CD8-positive, alpha-beta memory T cell (primary cell): ENCODE measurements at regions of chr21 and their contacts with region 1.

Region 1: DNA sequence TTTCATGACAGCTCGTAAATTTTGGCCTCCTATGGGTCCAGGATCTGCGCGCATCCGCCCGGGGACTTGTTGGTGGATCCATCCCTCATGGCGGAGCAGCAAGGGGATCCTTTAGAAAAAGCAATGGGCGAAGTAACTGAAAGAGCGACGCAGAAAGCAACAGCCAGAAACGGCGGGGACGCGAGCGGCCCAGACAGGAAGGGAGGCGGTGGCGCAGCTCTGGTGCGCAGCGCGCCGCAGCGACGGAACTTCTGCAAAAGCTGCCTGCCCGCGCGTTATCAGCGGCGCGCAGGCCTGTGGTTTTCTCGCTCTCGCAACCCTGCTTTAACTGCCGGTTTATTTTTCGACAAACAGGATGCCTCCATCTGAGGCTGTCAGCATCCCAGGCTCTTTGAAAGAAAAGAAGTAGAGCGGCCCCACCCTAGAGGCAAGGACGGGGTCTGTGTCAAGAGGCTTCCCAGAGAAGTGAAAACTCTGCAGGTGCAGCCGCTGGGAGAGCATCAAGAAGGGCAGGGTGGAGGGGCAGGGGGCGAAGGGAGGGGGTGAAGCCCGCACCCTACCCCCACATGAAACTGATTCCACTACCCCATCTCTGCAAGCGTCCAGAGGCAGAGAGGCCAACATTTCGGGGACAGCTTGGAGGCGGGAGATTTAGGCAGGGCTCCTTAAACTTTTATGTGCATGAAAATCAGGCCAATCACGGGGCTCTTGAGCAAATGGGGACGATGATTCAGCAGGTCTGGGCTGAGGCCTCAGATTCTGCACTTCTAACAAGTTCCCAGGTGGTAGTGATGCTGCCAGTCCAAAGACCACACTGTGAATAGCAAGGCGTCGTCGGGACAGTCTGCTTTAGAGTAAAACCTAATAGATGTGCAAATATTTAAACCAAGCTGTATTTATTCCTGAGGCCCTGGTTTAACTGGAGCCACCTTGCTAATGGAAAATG is 22.2 kb downstream of the RUNX1 start:
- DNase-seq: peak; percentile 73 to 91 (median 90)
- H3K4me3 ChIP-seq: peak overlapping the region; percentile 35
- H3K4me3 Mint-ChIP-seq: peak overlapping the region; percentile 83 to 94 (median 86)
- H3K27ac ChIP-seq: peak overlapping the region; percentile 76
- H3K27ac Mint-ChIP-seq: peak overlapping the region; percentile 96 to 100 (median 100)
- H3K4me1 ChIP-seq: peaks cover 90% of the 10 kb centered on the region
- H3K4me1 Mint-ChIP-seq: peaks cover 85 to 97% (median 95%) of the 10 kb centered on the region in 3 donors
- H3K27me3 ChIP-seq: no peaks in the 10 kb centered on the region
- H3K27me3 Mint-ChIP-seq: no peaks in the 10 kb centered on the region

Region 2: DNA sequence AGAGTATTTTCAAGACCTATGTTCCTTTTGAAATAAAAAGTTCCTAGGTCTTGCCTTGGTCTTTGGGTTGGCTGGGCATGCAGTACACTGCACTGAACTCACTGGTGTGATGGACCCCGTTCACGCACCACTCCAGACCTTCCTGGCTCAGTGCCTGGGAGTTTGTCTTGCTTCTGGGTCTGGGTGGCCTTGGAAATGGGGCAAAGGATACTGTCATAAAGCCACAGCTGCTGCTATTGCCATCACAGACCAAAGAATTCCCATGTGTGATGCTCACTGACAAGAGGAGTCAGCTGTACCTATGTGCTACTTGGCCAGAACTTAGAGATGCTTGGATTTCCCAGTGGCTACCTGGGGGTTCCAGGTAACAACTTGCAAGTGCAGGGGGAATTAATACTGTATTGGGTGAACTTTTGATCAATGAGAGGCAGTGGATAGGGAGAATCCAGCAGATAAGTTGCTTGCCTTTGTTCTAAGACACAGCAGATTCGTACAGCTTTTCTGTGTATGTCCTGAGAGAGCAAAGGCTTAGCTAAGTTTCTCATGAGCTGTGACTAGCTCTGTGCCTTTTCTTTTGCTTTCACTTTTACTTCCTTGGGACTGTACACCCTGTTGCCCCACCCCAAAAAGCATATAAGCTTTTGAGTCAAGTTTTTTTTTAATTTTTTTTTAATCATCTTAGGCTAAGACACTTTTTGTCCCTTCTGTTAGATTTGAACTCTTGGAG is 93.1 kb before region 1 on chr21:
- CTCF ChIA-PET with region 1: no interaction called
- POLR2A ChIA-PET with region 1: interaction called, 15 read pairs
- DNase-seq: peak in 4 of 5 donors; percentile 21 to 63 (median 57)
- H3K4me3 ChIP-seq: peak overlapping the region; percentile 51
- H3K4me3 Mint-ChIP-seq: peak overlapping the region; percentile 57 to 90 (median 84)
- H3K27ac ChIP-seq: peak overlapping the region; percentile 32
- H3K27ac Mint-ChIP-seq: peak overlapping the region; percentile 91 to 99 (median 98)
- H3K4me1 ChIP-seq: peaks cover 81% of the 10 kb centered on the region
- H3K4me1 Mint-ChIP-seq: peaks cover 83 to 92% (median 91%) of the 10 kb centered on the region in 3 donors
- H3K27me3 ChIP-seq: no peaks in the 10 kb centered on the region
- H3K27me3 Mint-ChIP-seq: no peaks in the 10 kb centered on the region

Region 3: GRCh38 chr21:35045542-35046262 is 18.8 kb after region 1 on chr21:
- CTCF ChIA-PET with region 1: interaction called, 20 read pairs
- POLR2A ChIA-PET with region 1: interaction called, 40 read pairs
- DNase-seq: peak in 4 of 5 donors; percentile 46 to 87 (median 76)
- H3K4me3 ChIP-seq: peak overlapping the region; percentile 83
- H3K4me3 Mint-ChIP-seq: peak overlapping the region; percentile 92 to 98 (median 97)
- H3K27ac ChIP-seq: peak overlapping the region; percentile 78
- H3K27ac Mint-ChIP-seq: peak overlapping the region; percentile 92 to 98 (median 97)
- H3K4me1 ChIP-seq: peaks cover 68% of the 10 kb centered on the region
- H3K4me1 Mint-ChIP-seq: peaks cover 82 to 88% (median 88%) of the 10 kb centered on the region in 3 donors
- H3K27me3 ChIP-seq: no peaks in the 10 kb centered on the region
- H3K27me3 Mint-ChIP-seq: peaks cover 0 to 20% of the 10 kb centered on the region in 2 donors